ENCODE measurements at regions of chr11 and their contacts with region 1.

Region 1: DNA sequence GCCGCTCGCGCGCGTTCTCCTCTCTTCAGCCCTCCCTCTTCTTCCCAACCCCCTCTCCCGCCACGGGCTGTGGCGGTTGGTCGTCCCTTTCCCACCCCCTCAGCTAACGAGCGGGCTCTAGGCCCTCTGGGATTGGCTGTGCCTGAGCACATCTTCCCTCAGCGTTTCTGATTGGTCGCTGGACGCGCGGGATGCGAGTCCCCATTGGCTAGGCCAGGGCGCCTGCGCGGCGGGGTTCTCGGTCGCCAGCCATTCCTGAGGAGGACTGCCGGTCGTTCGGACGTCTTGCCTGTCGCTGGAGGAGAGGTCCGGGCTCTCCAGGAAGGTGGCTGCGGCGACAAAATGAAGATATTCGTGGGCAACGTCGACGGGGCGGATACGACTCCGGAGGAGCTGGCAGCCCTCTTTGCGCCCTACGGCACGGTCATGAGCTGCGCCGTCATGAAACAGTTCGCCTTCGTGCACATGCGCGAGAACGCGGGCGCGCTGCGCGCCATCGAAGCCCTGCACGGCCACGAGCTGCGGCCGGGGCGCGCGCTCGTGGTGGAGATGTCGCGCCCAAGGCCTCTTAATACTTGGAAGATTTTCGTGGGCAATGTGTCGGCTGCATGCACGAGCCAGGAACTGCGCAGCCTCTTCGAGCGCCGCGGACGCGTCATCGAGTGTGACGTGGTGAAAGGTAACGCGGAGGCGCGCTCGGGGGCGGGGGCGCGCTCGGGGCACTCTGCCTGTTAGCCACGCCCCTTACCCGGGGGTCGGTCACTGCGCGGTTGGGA is at the start of gene RBM14:
- H3K4me3 ChIP-seq: peak within 1 kb of the TSS; percentile 75
- H3K27ac ChIP-seq: peak within 1 kb of the TSS; percentile 95
- H3K4me1 ChIP-seq: 0 out of 2 replicates have a peak, but pooled peaks cover 3% of the 10 kb centered on the region
- CTCF ChIP-seq: no peak

Region 2: GRCh38 chr11:66568124-66568916 is 48.2 kb before region 1 on chr11 and contains the start of gene CTSF:
- CTCF ChIA-PET with region 1: no interaction called
- POLR2A ChIA-PET with region 1: no interaction called
- H3K4me3 ChIP-seq: no peak within 1 kb of the TSS
- H3K27ac ChIP-seq: no peak within 1 kb of the TSS
- H3K4me1 ChIP-seq: no peaks in the 10 kb centered on the region
- CTCF ChIP-seq: no peak

Region 3: DNA sequence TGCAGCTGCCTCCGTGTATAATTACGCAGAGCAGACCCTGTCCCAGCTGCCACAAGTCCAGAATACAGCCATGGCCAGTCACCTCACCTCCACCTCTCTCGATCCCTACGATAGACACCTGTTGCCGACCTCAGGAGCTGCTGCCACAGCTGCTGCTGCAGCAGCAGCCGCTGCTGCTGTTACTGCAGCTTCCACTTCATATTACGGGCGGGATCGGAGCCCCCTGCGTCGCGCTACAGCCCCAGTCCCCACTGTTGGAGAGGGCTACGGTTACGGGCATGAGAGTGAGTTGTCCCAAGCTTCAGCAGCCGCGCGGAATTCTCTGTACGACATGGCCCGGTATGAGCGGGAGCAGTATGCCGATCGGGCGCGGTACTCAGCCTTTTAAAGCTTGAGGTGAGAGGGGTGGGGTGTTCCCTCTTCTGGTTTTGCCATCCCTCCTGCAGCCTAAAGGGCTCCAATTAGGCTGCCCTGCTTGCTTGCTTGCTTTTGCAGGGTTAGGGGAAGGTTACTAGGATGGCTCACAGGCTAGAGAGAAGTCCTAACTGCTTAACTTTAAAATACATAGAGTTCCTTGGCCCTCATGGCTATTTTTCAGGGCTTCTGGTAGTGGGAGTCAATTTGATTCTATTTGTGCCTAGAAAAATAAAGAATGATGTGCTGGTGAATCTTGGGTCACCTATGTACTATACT is 27.3 kb after region 1 on chr11:
- CTCF ChIA-PET with region 1: no interaction called
- POLR2A ChIA-PET with region 1: interaction called, 98 read pairs
- H3K4me3 ChIP-seq: no peak overlapping the region
- H3K27ac ChIP-seq: no peak overlapping the region
- H3K4me1 ChIP-seq: no peaks in the 10 kb centered on the region
- CTCF ChIP-seq: no peak

Region 4: GRCh38 chr11:67382276-67383136 is 765.9 kb after region 1 on chr11:
- CTCF ChIA-PET with region 1: no interaction called
- POLR2A ChIA-PET with region 1: no interaction called
- H3K4me3 ChIP-seq: no peak overlapping the region
- H3K27ac ChIP-seq: no peak overlapping the region
- H3K4me1 ChIP-seq: no peaks in the 10 kb centered on the region
- CTCF ChIP-seq: peak; percentile 92